CD8-positive, alpha-beta T cell (primary cell): ENCODE measurements at regions of chr4 and their contacts with region 1.

Region 1: DNA sequence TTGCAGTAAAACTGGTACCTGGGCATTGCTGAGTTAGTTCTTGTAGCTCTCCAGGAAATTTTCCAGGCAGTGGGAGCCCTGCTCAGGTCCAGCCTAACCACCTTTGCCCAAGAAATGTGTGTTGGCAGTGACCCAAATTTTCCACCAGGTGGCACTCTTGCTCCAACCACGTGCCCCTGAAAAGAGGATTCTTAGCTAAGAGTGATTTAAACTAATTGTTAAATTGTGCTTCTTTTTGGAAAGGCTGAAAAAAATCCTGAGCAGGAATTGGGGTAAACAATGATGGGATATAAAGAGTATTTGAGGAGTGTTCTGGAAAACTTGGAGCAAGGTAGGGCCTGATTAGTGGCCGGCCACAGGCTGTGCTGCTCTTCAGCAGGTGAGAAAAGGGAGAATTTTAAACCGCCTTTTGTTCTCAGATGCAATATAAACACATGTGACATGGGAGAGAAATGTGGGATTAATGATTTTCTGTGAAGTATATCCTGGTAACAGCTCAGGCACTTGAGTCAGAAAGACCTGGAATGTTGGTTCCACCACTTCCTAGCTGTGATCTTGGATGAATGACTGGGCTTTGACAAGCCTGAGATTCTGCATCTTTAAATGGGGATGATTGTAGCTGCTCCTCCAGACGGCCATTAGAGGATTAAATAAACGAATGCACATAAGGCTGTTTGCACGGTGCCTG is 219.6 kb downstream of the PTTG2 start:
- DNase-seq: peak; percentile 58 to 86 (median 76)
- ATAC-seq: peak; percentile 65
- H3K4me3 ChIP-seq: no peak overlapping the region
- H3K4me3 Mint-ChIP-seq: no peak overlapping the region
- H3K27ac ChIP-seq: no peak overlapping the region
- H3K27ac Mint-ChIP-seq: no peak overlapping the region
- H3K4me1 ChIP-seq: peaks cover 19% of the 10 kb centered on the region
- H3K4me1 Mint-ChIP-seq: peaks cover 37% of the 10 kb centered on the region
- H3K27me3 ChIP-seq: no peaks in the 10 kb centered on the region
- H3K27me3 Mint-ChIP-seq: no peaks in the 10 kb centered on the region
- CTCF ChIP-seq: peak; percentile 97

Region 2: GRCh38 chr4:38132107-38132673 is 47.6 kb before region 1 on chr4:
- CTCF ChIA-PET with region 1: interaction called, 9 read pairs
- POLR2A ChIA-PET with region 1: no interaction called
- intact Hi-C with region 1: loop called (anchors 1 to 5 kb)
- DNase-seq: peak; percentile 30 to 94 (median 66)
- ATAC-seq: peak; percentile 72
- H3K4me3 ChIP-seq: no peak overlapping the region
- H3K4me3 Mint-ChIP-seq: peak overlapping the region; percentile 17
- H3K27ac ChIP-seq: peak overlapping the region; percentile 25 to 66
- H3K27ac Mint-ChIP-seq: peak overlapping the region; percentile 93
- H3K4me1 ChIP-seq: peaks cover 53% of the 10 kb centered on the region
- H3K4me1 Mint-ChIP-seq: peaks cover 54% of the 10 kb centered on the region
- H3K27me3 ChIP-seq: no peaks in the 10 kb centered on the region
- H3K27me3 Mint-ChIP-seq: no peaks in the 10 kb centered on the region
- CTCF ChIP-seq: no peak

Region 3: GRCh38 chr4:38193236-38193863 is 13.5 kb after region 1 on chr4:
- CTCF ChIA-PET with region 1: interaction called, 11 read pairs
- POLR2A ChIA-PET with region 1: no interaction called
- intact Hi-C with region 1: no loop called
- DNase-seq: no peak
- ATAC-seq: no peak
- H3K4me3 ChIP-seq: no peak overlapping the region
- H3K4me3 Mint-ChIP-seq: no peak overlapping the region
- H3K27ac ChIP-seq: no peak overlapping the region
- H3K27ac Mint-ChIP-seq: no peak overlapping the region
- H3K4me1 ChIP-seq: no peaks in the 10 kb centered on the region
- H3K4me1 Mint-ChIP-seq: no peaks in the 10 kb centered on the region
- H3K27me3 ChIP-seq: no peaks in the 10 kb centered on the region
- H3K27me3 Mint-ChIP-seq: no peaks in the 10 kb centered on the region
- CTCF ChIP-seq: no peak

Region 4: DNA sequence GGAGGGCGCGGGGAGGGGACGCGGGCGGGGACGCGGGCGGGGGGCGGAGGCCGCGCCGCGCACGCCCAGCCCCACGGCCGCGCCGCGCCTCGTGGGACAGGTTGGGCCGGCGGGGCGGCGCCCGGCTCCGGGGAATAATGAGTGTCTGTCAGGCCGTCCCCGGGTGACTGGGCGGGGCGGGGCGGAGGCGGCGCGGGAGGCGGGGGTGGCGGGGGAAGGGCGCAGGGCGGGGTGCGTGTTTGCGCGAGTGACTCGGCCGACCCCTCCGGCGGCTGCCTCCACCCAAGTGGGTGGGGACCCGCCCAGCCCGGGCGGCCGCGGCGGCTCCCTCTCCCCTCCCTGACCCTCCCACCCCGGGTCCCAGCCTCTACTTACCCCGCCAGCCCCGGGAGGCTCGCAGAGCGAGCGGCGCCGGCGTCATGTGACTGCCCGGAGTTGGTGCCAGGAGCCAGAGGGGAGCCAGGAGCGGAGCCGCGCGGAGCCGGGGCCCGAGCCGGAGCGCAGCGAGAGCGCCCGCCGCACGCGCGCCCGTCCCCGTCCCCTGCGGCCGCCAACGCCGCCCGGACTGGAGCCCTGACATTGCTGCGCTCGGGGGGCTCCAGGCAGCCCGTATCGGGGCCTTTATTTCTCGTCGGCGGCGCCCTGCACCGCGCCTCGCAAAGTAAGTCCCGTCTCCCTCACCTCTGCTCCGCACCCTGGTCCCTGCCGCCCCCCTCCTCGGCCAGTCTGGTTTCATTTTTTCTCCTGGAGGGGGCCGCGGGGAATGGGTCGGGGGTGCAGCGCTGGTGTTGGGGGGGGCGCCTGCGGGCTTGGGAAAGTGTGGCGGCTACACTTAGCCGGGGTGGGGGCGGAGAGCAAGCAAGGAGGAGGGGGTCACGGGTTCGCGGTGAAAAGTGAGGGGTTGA is 484.2 kb after region 1 on chr4 and contains the start of gene KLF3:
- CTCF ChIA-PET with region 1: interaction called, 18 read pairs
- POLR2A ChIA-PET with region 1: no interaction called
- intact Hi-C with region 1: no loop called
- DNase-seq: peak; percentile 90 to 96 (median 93)
- ATAC-seq: peak; percentile 70
- H3K4me3 ChIP-seq: peak within 1 kb of the TSS; percentile 84 to 89
- H3K4me3 Mint-ChIP-seq: peak within 1 kb of the TSS; percentile 99
- H3K27ac ChIP-seq: peak within 1 kb of the TSS; percentile 90 to 93
- H3K27ac Mint-ChIP-seq: peak within 1 kb of the TSS; percentile 98
- H3K4me1 ChIP-seq: peaks cover 61% of the 10 kb centered on the region
- H3K4me1 Mint-ChIP-seq: peaks cover 69% of the 10 kb centered on the region
- H3K27me3 ChIP-seq: no peaks in the 10 kb centered on the region
- H3K27me3 Mint-ChIP-seq: no peaks in the 10 kb centered on the region
- CTCF ChIP-seq: no peak
- total RNA-seq, gene KLF3: 181 to 194 TPM

Region 5: GRCh38 chr4:38698176-38698575 is 518.3 kb after region 1 on chr4:
- CTCF ChIA-PET with region 1: interaction called, 13 read pairs
- POLR2A ChIA-PET with region 1: interaction called, 5 read pairs
- intact Hi-C with region 1: no loop called
- DNase-seq: no peak
- ATAC-seq: no peak
- H3K4me3 ChIP-seq: no peak overlapping the region
- H3K4me3 Mint-ChIP-seq: no peak overlapping the region
- H3K27ac ChIP-seq: no peak overlapping the region
- H3K27ac Mint-ChIP-seq: no peak overlapping the region
- H3K4me1 ChIP-seq: no peaks in the 10 kb centered on the region
- H3K4me1 Mint-ChIP-seq: peaks cover 4% of the 10 kb centered on the region
- H3K27me3 ChIP-seq: no peaks in the 10 kb centered on the region
- H3K27me3 Mint-ChIP-seq: no peaks in the 10 kb centered on the region
- CTCF ChIP-seq: no peak

Region 6: DNA sequence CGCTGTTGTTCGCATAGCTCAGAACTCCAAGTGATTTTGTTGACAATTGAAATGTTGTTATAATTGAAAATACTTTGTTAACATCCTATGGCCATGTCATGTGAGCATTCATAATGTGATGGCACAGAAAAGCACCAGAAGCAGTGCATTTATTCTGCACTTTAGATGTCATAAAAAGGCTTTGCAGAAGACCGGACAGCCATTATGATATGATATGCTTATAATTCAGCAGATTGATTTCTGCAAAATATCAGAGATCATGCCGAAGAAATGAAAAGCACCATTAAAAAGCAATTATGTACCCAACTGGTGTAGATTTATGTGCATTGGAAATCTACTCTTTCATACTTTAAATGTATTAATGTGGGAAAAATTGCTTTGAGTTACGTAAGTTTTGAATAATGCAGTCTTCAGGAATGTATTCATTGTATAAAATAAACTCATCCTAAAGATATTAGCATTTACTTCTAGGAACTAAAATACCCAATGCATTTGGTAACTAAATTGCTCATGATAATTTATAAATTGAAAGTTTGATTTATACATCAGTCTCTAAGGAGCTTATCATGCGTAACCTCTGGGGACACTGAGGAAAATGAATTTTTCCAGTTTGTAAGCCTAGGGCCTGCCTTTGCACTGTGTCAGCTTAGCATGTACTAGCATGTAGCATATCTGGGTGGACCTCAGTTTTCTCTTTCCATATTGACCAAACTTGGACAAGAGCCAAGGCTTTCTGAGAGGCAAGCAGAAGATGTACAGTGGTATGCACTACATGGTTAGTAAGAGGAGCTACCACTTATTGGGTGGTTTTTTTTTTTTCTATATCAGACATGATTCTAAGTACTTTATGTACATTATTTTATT is 559.3 kb after region 1 on chr4:
- CTCF ChIA-PET with region 1: interaction called, 25 read pairs
- POLR2A ChIA-PET with region 1: interaction called, 3 read pairs
- intact Hi-C with region 1: no loop called
- DNase-seq: no peak
- ATAC-seq: no peak
- H3K4me3 ChIP-seq: no peak overlapping the region
- H3K4me3 Mint-ChIP-seq: no peak overlapping the region
- H3K27ac ChIP-seq: no peak overlapping the region
- H3K27ac Mint-ChIP-seq: no peak overlapping the region
- H3K4me1 ChIP-seq: no peaks in the 10 kb centered on the region
- H3K4me1 Mint-ChIP-seq: peaks cover 2% of the 10 kb centered on the region
- H3K27me3 ChIP-seq: no peaks in the 10 kb centered on the region
- H3K27me3 Mint-ChIP-seq: peaks cover 8% of the 10 kb centered on the region
- CTCF ChIP-seq: no peak

Region 7: GRCh38 chr4:38856524-38857337 is 676.9 kb after region 1 on chr4 and contains the start of gene TLR6:
- CTCF ChIA-PET with region 1: interaction called, 3 read pairs
- POLR2A ChIA-PET with region 1: no interaction called
- intact Hi-C with region 1: loop called (anchors 1 to 2 kb)
- DNase-seq: peak; percentile 35 to 86 (median 64)
- ATAC-seq: peak; percentile 85
- H3K4me3 ChIP-seq: peak within 1 kb of the TSS; percentile 31 to 57
- H3K4me3 Mint-ChIP-seq: peak within 1 kb of the TSS; percentile 74
- H3K27ac ChIP-seq: peak within 1 kb of the TSS; percentile 32 to 50
- H3K27ac Mint-ChIP-seq: peak within 1 kb of the TSS; percentile 62
- H3K4me1 ChIP-seq: peaks cover 17% of the 10 kb centered on the region
- H3K4me1 Mint-ChIP-seq: peaks cover 38% of the 10 kb centered on the region
- H3K27me3 ChIP-seq: no peaks in the 10 kb centered on the region
- H3K27me3 Mint-ChIP-seq: no peaks in the 10 kb centered on the region
- CTCF ChIP-seq: peak; percentile 93
- total RNA-seq, gene TLR6: 0.31 to 0.60 TPM

Region 8: GRCh38 chr4:40180356-40180755 is 2000.5 kb after region 1 on chr4:
- CTCF ChIA-PET with region 1: no interaction called
- POLR2A ChIA-PET with region 1: no interaction called
- intact Hi-C with region 1: no loop called
- DNase-seq: no peak
- ATAC-seq: no peak
- H3K4me3 ChIP-seq: no peak overlapping the region
- H3K4me3 Mint-ChIP-seq: no peak overlapping the region
- H3K27ac ChIP-seq: no peak overlapping the region
- H3K27ac Mint-ChIP-seq: no peak overlapping the region
- H3K4me1 ChIP-seq: peaks cover 14% of the 10 kb centered on the region
- H3K4me1 Mint-ChIP-seq: peaks cover 31% of the 10 kb centered on the region
- H3K27me3 ChIP-seq: no peaks in the 10 kb centered on the region
- H3K27me3 Mint-ChIP-seq: no peaks in the 10 kb centered on the region
- CTCF ChIP-seq: no peak